Gastrocnemius medialis (tissue), 4 donors: ENCODE measurements at regions of chr7 and their contacts with region 1.

Region 1: DNA sequence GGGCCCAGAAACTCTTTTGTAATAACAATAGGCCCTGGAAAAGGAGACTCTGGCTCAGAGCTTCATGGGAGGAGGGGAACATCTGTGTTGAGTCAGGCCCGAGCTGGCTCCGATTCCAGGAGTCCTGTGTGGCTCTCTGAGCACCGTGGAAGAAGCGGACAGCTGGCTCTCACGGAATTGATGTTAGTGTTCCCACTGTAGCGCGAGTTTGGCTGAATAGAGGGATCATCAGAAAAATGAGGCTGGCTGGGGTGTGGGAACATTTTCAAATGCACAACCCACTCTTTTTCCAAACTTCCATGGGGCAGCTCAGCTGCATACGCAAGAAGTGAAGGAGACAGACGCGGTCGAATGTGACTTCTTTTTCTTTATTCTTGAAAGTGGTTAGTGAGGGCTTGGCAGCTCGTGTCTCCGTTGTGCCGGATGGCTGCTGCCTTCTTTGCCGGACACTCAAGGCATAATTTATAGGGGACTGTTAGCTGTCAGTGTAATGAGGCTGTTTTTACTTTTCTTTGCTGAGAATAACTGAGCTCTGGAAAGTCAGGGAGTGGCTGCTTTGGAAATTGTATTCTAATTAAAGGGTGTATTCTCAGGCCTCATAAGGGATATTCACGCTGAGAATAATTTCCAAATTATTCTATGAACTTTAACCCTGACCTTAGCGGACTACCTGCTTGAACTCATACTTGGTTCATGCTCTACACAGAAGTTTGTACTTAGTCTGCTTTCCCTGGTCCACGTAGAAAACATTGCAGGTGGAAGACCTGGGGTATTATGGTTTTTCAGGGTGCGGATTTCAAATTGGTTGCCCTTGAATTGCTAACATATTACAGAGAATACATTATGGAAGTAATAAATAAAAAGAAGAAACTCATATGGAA is 23.1 kb downstream of the MDFIC start:
- DNase-seq: peak; percentile 64 to 81
- ATAC-seq: peak; percentile 96 to 97
- H3K4me3 ChIP-seq: peak overlapping the region; percentile 48 to 52 (median 52)
- H3K27ac ChIP-seq: peak overlapping the region; percentile 64 to 78 (median 76)
- H3K4me1 ChIP-seq: peaks cover 20 to 25% of the 10 kb centered on the region in 2 donors
- H3K27me3 ChIP-seq: no peaks in the 10 kb centered on the region
- CTCF ChIP-seq: no peak
- POLR2A ChIP-seq: no peak

Region 2: GRCh38 chr7:114689406-114689805 is 255.6 kb before region 1 on chr7:
- in situ Hi-C with region 1: no loop called
- intact Hi-C with region 1: no loop called
- DNase-seq: no peak
- ATAC-seq: no peak
- H3K4me3 ChIP-seq: no peak overlapping the region
- H3K27ac ChIP-seq: no peak overlapping the region
- H3K4me1 ChIP-seq: no peaks in the 10 kb centered on the region
- H3K27me3 ChIP-seq: no peaks in the 10 kb centered on the region
- CTCF ChIP-seq: no peak
- POLR2A ChIP-seq: no peak

Region 3: GRCh38 chr7:115008465-115009114 is 63.6 kb after region 1 on chr7:
- in situ Hi-C with region 1: no loop called
- intact Hi-C with region 1: loop called (anchors 10 kb)
- DNase-seq: peak; percentile 56 to 78
- ATAC-seq: peak; percentile 68 to 72
- H3K4me3 ChIP-seq: no peak overlapping the region
- H3K27ac ChIP-seq: peak overlapping the region; percentile 3 to 53 (median 20)
- H3K4me1 ChIP-seq: peaks cover 36 to 40% of the 10 kb centered on the region in 2 donors
- H3K27me3 ChIP-seq: no peaks in the 10 kb centered on the region
- CTCF ChIP-seq: no peak
- POLR2A ChIP-seq: no peak

Region 4: DNA sequence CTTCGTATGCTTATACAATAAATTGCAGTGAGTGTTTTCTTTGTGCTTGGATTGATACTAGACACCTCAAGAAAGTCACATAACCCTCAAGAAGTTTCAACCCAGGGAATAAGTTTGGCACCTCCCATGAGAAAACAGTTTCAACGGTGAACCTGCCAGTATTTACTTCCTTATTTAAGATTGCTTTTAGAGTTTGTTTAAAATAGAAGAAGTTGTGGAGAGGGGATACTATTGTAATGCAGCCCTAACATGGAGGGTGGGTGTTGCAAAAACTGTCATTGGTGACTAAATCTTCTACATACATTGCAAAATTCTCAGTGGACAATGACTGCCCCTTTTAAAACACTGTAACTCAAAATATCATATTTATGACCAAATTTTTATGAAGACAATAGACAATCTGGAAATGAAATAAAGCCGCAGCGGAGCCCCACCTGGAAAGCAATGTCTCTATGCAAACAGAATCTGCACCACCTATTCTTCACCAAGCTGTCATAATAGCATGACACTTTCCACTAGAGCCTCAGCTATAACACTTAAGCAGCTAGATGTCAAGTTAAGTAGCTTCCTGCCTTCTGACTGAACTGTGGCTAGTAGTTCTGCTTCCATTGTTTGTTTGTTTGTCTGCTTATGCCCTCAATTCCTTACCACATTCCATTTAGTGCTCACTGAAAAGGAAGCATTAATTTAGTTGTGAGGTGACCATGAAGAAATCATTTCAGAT is 75.1 kb after region 1 on chr7:
- in situ Hi-C with region 1: no loop called
- intact Hi-C with region 1: no loop called
- DNase-seq: no peak
- ATAC-seq: no peak
- H3K4me3 ChIP-seq: no peak overlapping the region
- H3K27ac ChIP-seq: no peak overlapping the region
- H3K4me1 ChIP-seq: no peaks in the 10 kb centered on the region
- H3K27me3 ChIP-seq: no peaks in the 10 kb centered on the region
- CTCF ChIP-seq: no peak
- POLR2A ChIP-seq: no peak